ENCODE measurements at regions of chr5 and their contacts with region 1.

Region 1: GRCh38 chr5:123559434-123559775 is 47.4 kb downstream of the CSNK1G3 start:
- DNase-seq: no peak
- ATAC-seq: no peak
- H3K4me3 ChIP-seq: no peak overlapping the region
- H3K27ac ChIP-seq: no peak overlapping the region
- H3K4me1 ChIP-seq: no peaks in the 10 kb centered on the region
- H3K27me3 ChIP-seq: no peaks in the 10 kb centered on the region
- CTCF ChIP-seq: no peak
- EP300 ChIP-seq: no peak
- POLR2A ChIP-seq: no peak
- RAD21 ChIP-seq: no peak

Region 2: GRCh38 chr5:123496892-123497291 is 62.5 kb before region 1 on chr5:
- CTCF ChIA-PET with region 1: no interaction called
- POLR2A ChIA-PET with region 1: no interaction called
- RAD21 ChIA-PET with region 1: no interaction called
- SMC1A ChIA-PET with region 1: no interaction called
- in situ Hi-C with region 1: no loop called
- intact Hi-C with region 1: no loop called
- DNase-seq: no peak
- ATAC-seq: no peak
- H3K4me3 ChIP-seq: no peak overlapping the region
- H3K27ac ChIP-seq: no peak overlapping the region
- H3K4me1 ChIP-seq: no peaks in the 10 kb centered on the region
- H3K27me3 ChIP-seq: no peaks in the 10 kb centered on the region
- CTCF ChIP-seq: no peak
- EP300 ChIP-seq: no peak
- POLR2A ChIP-seq: no peak
- RAD21 ChIP-seq: no peak

Region 3: GRCh38 chr5:123511648-123512605 is 47.5 kb before region 1 on chr5 and contains the start of gene CSNK1G3:
- CTCF ChIA-PET with region 1: no interaction called
- POLR2A ChIA-PET with region 1: interaction called, 10 read pairs
- RAD21 ChIA-PET with region 1: no interaction called
- SMC1A ChIA-PET with region 1: no interaction called
- in situ Hi-C with region 1: no loop called
- intact Hi-C with region 1: no loop called
- DNase-seq: peak; percentile 82
- ATAC-seq: peak; percentile 95
- H3K4me3 ChIP-seq: peak within 1 kb of the TSS; percentile 82
- H3K27ac ChIP-seq: peak within 1 kb of the TSS; percentile 83
- H3K4me1 ChIP-seq: peaks cover 9% of the 10 kb centered on the region
- H3K27me3 ChIP-seq: no peaks in the 10 kb centered on the region
- CTCF ChIP-seq: peak in 1 of 3 experiments; percentile 19; a peak in 2 of 6 replicates
- EP300 ChIP-seq: no peak
- POLR2A ChIP-seq: peak; percentile 96
- RAD21 ChIP-seq: no peak
- polyA plus RNA-seq, gene CSNK1G3: 7.4 to 7.8 TPM

Region 4: DNA sequence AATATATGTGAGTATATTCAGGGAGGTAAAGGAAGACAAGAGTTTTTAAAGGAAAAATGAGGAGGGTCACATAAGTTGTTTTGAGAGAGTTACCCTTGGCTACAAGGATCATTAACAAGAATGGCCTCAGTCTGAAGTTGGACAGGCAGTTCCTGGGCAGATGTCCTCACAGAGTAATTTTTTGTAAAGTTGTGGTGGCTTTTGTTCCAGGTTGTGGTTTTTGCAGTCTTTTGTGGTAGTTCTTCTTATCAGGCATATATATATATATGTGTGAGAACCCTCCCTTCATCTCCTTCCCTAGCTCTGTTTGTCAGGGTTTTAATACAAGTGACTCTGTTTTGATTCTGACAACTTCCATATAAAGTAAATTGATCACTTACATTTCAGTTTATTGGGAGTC is 12.5 kb after region 1 on chr5:
- CTCF ChIA-PET with region 1: interaction called, 4 read pairs
- POLR2A ChIA-PET with region 1: no interaction called
- RAD21 ChIA-PET with region 1: interaction called, 3 read pairs
- SMC1A ChIA-PET with region 1: interaction called, 11 read pairs
- in situ Hi-C with region 1: no loop called
- intact Hi-C with region 1: no loop called
- DNase-seq: no peak
- ATAC-seq: peak; percentile 48
- H3K4me3 ChIP-seq: no peak overlapping the region
- H3K27ac ChIP-seq: no peak overlapping the region
- H3K4me1 ChIP-seq: no peaks in the 10 kb centered on the region
- H3K27me3 ChIP-seq: no peaks in the 10 kb centered on the region
- CTCF ChIP-seq: no peak
- EP300 ChIP-seq: no peak
- POLR2A ChIP-seq: no peak
- RAD21 ChIP-seq: no peak

Region 5: GRCh38 chr5:124176691-124177090 is 617.3 kb after region 1 on chr5:
- CTCF ChIA-PET with region 1: no interaction called
- POLR2A ChIA-PET with region 1: no interaction called
- RAD21 ChIA-PET with region 1: no interaction called
- SMC1A ChIA-PET with region 1: no interaction called
- in situ Hi-C with region 1: no loop called
- intact Hi-C with region 1: no loop called
- DNase-seq: no peak
- ATAC-seq: no peak
- H3K4me3 ChIP-seq: no peak overlapping the region
- H3K27ac ChIP-seq: no peak overlapping the region
- H3K4me1 ChIP-seq: no peaks in the 10 kb centered on the region
- H3K27me3 ChIP-seq: no peaks in the 10 kb centered on the region
- CTCF ChIP-seq: peak in 1 of 3 experiments; percentile 6; a peak in 1 of 6 replicates
- EP300 ChIP-seq: no peak
- POLR2A ChIP-seq: no peak
- RAD21 ChIP-seq: no peak

Measured in GM12878 (cell line).